CD14-positive monocyte (primary cell): ENCODE measurements at regions of chr15 and their contacts with region 1.

Region 1: DNA sequence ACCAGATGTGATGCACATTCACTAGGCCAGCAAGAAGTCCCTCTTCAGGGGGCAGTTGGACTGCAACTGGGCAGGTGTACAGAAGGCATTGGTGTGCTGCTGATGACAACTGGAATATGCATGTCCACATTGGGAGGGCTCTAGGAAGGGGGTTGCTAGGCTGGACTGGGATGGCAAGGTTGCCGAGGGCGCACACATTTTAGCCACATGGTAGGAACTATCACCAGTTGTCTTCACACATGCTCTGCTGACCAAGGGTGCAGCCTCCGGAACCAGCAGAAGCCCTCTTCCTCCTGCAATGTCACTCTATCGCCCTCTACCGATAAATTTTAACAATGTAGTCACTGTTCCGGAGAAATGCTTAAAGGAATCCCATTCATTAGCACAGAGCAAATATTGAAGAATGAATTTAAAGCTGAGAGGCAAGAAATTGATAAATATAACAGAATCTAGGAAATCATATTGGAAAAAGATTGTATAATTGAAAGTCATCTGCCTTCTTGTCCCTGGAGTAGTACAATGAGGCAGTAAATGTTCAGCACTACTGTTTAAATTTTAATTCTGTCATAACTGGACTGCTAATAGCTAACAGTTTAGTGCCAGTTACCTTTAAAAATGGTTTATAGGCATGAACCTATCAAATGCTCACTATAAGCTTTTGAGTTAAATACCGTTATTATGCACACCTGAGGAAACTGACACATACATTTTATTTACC is 22.6 kb upstream of the LYSMD4 start:
- DNase-seq: peak; percentile 48 to 58 (median 56)
- H3K4me3 ChIP-seq: no peak overlapping the region
- H3K4me3 Mint-ChIP-seq: no peak overlapping the region
- H3K27ac ChIP-seq: no peak overlapping the region
- H3K27ac Mint-ChIP-seq: no peak overlapping the region
- H3K4me1 ChIP-seq: no peaks in the 10 kb centered on the region
- H3K4me1 Mint-ChIP-seq: peaks cover 4% of the 10 kb centered on the region
- H3K27me3 ChIP-seq: no peaks in the 10 kb centered on the region
- H3K27me3 Mint-ChIP-seq: peaks cover 0 to 2% (median 1%) of the 10 kb centered on the region in 3 donors
- CTCF ChIP-seq: peak; percentile 89

Region 2: DNA sequence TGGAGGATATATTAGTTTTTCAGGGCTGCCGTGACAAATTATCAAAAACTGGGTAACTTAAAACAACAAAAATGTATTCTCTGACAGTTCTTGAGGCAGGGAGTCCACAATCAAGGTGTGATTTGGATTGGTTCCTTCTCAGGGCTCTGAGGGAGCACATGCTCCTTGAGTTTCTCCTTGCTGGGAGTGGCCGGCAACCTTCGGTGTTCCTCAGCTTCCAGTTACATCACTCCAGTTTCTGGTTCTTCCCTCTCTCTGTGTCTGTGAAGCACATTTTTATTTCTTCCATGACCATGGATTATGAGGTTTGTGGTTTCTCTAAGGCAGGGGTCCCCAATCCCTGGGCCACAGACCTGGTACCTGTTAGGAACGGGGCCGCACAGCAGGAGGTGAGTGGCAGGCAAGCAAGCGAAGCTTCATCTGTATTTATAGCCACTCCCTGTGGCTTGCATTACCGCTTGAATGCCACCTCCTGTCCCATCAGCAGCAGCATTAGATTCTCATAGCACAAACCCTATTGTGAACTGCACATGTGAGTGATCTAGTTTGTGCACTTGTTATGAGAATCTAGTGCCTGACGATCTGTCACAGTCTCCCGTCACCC is 480.2 kb before region 1 on chr15:
- intact Hi-C with region 1: loop called (anchors 5 kb)
- DNase-seq: no peak
- H3K4me3 ChIP-seq: no peak overlapping the region
- H3K4me3 Mint-ChIP-seq: no peak overlapping the region
- H3K27ac ChIP-seq: no peak overlapping the region
- H3K27ac Mint-ChIP-seq: peak overlapping the region in 1 of 7 donors; percentile 50
- H3K4me1 ChIP-seq: no peaks in the 10 kb centered on the region
- H3K4me1 Mint-ChIP-seq: peaks cover 4% of the 10 kb centered on the region
- H3K27me3 ChIP-seq: no peaks in the 10 kb centered on the region
- H3K27me3 Mint-ChIP-seq: peaks cover 0 to 2% (median 0%) of the 10 kb centered on the region in 3 donors
- CTCF ChIP-seq: no peak

Region 3: GRCh38 chr15:99282121-99282520 is 473.7 kb before region 1 on chr15:
- intact Hi-C with region 1: loop called in 1 of 2 experiments (anchors 5 kb)
- DNase-seq: no peak
- H3K4me3 ChIP-seq: no peak overlapping the region
- H3K4me3 Mint-ChIP-seq: no peak overlapping the region
- H3K27ac ChIP-seq: no peak overlapping the region
- H3K27ac Mint-ChIP-seq: no peak overlapping the region
- H3K4me1 ChIP-seq: no peaks in the 10 kb centered on the region
- H3K4me1 Mint-ChIP-seq: peaks cover 7% of the 10 kb centered on the region
- H3K27me3 ChIP-seq: no peaks in the 10 kb centered on the region
- H3K27me3 Mint-ChIP-seq: peaks cover 0 to 2% (median 0%) of the 10 kb centered on the region in 3 donors
- CTCF ChIP-seq: no peak

Region 4: GRCh38 chr15:99826157-99826780 is 70.4 kb after region 1 on chr15:
- intact Hi-C with region 1: no loop called
- DNase-seq: no peak
- H3K4me3 ChIP-seq: no peak overlapping the region
- H3K4me3 Mint-ChIP-seq: no peak overlapping the region
- H3K27ac ChIP-seq: no peak overlapping the region
- H3K27ac Mint-ChIP-seq: no peak overlapping the region
- H3K4me1 ChIP-seq: no peaks in the 10 kb centered on the region
- H3K4me1 Mint-ChIP-seq: no peaks in the 10 kb centered on the region
- H3K27me3 ChIP-seq: no peaks in the 10 kb centered on the region
- H3K27me3 Mint-ChIP-seq: no peaks in the 10 kb centered on the region
- CTCF ChIP-seq: no peak

Region 5: DNA sequence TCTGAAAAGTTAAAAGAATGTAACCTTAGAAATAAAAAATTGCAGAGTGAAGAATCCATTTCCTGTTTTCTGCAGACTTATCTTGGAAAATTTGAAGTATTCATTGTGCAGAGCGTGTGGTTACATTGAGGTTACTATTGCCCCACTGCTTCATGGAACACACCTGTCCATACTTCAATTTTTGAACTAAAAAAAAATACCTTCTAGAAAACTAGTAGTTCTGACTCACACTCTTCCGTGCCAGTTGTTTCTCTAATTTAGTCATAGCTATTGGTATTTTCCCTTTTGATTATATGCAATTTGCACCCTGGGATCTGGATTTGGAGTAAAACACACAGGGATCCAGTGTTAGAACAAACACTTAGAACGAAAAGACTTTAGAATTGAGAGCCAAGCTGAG is 89.2 kb after region 1 on chr15:
- intact Hi-C with region 1: no loop called
- DNase-seq: no peak
- H3K4me3 ChIP-seq: no peak overlapping the region
- H3K4me3 Mint-ChIP-seq: no peak overlapping the region
- H3K27ac ChIP-seq: no peak overlapping the region
- H3K27ac Mint-ChIP-seq: no peak overlapping the region
- H3K4me1 ChIP-seq: no peaks in the 10 kb centered on the region
- H3K4me1 Mint-ChIP-seq: no peaks in the 10 kb centered on the region
- H3K27me3 ChIP-seq: no peaks in the 10 kb centered on the region
- H3K27me3 Mint-ChIP-seq: peaks cover 0 to 3% (median 2%) of the 10 kb centered on the region in 3 donors
- CTCF ChIP-seq: no peak

Region 6: DNA sequence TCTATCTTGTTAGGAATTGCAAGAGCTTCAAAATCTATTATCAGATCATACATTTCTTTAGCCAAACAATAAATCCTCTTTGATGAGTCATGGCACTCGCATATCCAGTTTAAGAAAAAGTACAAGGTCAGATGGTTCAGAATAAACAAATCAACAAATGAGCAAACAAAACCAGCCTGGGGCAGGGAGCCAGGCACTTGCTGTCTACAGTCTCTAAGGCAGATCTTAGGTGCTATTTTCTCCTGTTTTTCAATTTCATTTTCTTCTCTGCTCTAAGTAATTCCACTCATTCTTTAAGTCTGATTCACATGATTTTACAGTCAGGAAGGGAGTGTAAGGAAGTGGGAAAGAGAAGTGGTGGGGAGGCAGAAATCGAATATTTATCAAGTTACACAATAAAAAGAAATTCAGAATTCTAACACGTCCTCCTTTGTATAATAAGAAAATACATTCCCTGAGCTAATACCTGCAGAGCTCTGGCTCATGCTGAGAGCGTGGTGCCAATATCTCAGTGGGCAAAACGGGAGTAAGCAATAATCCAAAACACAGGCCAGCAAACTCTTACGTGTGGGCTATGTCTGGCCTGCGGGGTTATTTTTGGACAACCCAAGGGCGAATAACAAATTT is 287.3 kb after region 1 on chr15:
- intact Hi-C with region 1: no loop called
- DNase-seq: no peak
- H3K4me3 ChIP-seq: peak overlapping the region in 1 of 3 experiments; percentile 42
- H3K4me3 Mint-ChIP-seq: peak overlapping the region; percentile 7 to 72
- H3K27ac ChIP-seq: no peak overlapping the region
- H3K27ac Mint-ChIP-seq: peak overlapping the region in 2 of 7 donors; percentile 21 to 69
- H3K4me1 ChIP-seq: peaks cover 8 to 15% of the 10 kb centered on the region in 2 donors
- H3K4me1 Mint-ChIP-seq: peaks cover 13% of the 10 kb centered on the region
- H3K27me3 ChIP-seq: no peaks in the 10 kb centered on the region
- H3K27me3 Mint-ChIP-seq: peaks cover 1 to 4% (median 2%) of the 10 kb centered on the region in 3 donors
- CTCF ChIP-seq: no peak